Psoas muscle (tissue), 8 donors: ENCODE measurements at regions of chr1 and their contacts with region 1.

Region 1: GRCh38 chr1:165317612-165318011 is 38.9 kb downstream of the LMX1A start:
- DNase-seq: no peak
- ATAC-seq: no peak
- H3K4me3 ChIP-seq: no peak overlapping the region
- H3K27ac ChIP-seq: no peak overlapping the region
- H3K4me1 ChIP-seq: no peaks in the 10 kb centered on the region
- H3K27me3 ChIP-seq: peaks cover 0 to 26% (median 5%) of the 10 kb centered on the region in 3 donors
- CTCF ChIP-seq: no peak

Region 2: GRCh38 chr1:166053395-166053794 is 735.8 kb after region 1 on chr1:
- intact Hi-C with region 1: loop called in 1 of 2 experiments (anchors 5 kb)
- DNase-seq: no peak
- ATAC-seq: no peak
- H3K4me3 ChIP-seq: no peak overlapping the region
- H3K27ac ChIP-seq: no peak overlapping the region
- H3K4me1 ChIP-seq: no peaks in the 10 kb centered on the region
- H3K27me3 ChIP-seq: no peaks in the 10 kb centered on the region
- CTCF ChIP-seq: no peak